ENCODE measurements at regions of chr5 and their contacts with region 1.

Region 1: DNA sequence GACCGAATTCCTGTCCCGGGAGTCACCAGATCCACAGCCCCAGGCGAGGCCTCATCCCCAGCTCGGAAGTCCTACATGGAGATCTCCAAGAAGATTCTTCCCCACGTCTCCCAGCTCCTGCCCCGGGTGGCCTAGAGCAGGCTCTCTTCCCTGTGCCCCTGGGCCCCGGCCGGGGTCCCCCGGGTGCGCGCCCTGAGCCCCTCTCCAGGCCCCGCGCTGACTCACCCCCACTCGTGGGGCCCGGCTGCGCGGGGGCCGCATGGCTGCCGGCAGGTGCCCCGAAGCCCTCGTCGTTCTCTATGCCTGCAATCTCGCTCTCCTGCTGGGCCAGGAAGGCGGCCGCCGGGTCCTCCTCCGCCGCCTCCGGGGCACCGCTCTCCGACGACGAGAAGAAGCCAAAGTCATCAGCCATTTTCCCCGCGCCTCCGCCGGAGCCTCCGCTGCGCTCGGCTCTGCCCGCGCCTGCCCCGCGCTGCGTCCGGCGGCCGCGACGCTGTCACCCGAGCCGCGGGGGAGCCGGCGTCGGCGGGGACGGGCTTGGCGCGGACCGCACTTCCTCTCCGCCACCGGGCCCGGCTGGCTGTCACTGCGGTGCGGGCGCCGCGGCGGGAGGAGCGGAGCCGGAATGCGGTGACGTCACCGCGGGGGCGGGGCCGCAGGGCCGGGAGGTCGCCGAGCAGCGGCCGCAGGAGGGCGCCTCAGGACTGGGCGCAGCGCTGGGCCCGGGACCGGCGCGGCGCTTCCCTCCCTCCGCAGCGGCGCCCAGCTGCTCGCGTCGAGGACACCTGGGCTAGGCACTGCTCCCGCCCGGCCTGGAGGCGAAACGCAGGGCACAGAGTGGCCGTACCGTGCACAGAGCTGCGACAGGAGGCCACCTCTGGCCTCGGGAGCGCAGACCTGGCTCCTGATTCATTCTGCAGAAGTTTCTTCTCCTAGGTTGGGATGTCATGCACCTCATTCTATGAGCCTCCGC is at the start of gene CLTB:
- DNase-seq: peak; percentile 89
- ATAC-seq: peak; percentile 97
- H3K4me3 Mint-ChIP-seq: peak within 1 kb of the TSS; percentile 68
- H3K27ac Mint-ChIP-seq: peak within 1 kb of the TSS; percentile 61
- H3K4me1 Mint-ChIP-seq: peaks cover 25% of the 10 kb centered on the region
- H3K27me3 Mint-ChIP-seq: peaks cover 12% of the 10 kb centered on the region
- total RNA-seq, gene CLTB: 56.7 to 61.8 TPM

Region 2: DNA sequence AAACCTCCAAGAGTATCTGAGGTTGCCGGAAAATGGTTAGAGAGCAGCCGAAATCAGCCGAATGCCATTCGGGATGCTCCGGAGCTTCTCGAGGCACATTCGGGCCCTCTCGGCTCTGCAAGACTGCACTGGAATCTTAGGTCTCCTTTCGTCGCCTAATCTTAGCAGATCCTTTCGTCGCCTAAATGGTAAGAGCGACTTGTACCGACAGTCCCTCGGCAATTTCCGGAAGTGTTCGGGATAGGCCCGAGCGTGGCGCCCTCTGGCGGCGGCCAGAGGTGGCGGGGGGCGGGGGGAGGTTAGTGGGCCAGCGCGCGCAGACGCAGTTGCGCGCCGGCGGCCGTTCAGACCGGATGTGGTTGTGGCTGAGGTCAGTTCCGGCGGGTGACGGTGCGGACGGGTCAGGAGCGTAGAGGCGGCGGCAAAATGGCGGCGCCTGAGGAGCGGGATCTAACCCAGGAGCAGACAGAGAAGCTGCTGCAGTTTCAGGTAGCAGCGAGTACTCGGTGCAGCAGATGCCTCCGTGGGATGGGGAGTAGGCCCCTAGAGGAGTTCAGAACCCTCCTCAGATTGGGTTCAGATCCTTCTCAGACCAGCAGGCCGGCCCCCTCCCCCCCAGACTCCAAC is 31.9 kb after region 1 on chr5 and contains the start of gene FAF2:
- CTCF ChIA-PET with region 1: interaction called, 30 read pairs
- DNase-seq: peak; percentile 97
- ATAC-seq: peak; percentile 95
- H3K4me3 Mint-ChIP-seq: peak within 1 kb of the TSS; percentile 98
- H3K27ac Mint-ChIP-seq: peak within 1 kb of the TSS; percentile 99
- H3K4me1 Mint-ChIP-seq: peaks cover 32% of the 10 kb centered on the region
- H3K27me3 Mint-ChIP-seq: peaks cover 2% of the 10 kb centered on the region
- total RNA-seq, gene FAF2: 29.9 to 38.7 TPM

Region 3: GRCh38 chr5:176537608-176538504 is 121.6 kb after region 1 on chr5:
- CTCF ChIA-PET with region 1: interaction called, 28 read pairs
- DNase-seq: peak; percentile 100
- ATAC-seq: peak; percentile 76
- H3K4me3 Mint-ChIP-seq: peak overlapping the region; percentile 93
- H3K27ac Mint-ChIP-seq: peak overlapping the region; percentile 90
- H3K4me1 Mint-ChIP-seq: peaks cover 68% of the 10 kb centered on the region
- H3K27me3 Mint-ChIP-seq: no peaks in the 10 kb centered on the region

Region 4: DNA sequence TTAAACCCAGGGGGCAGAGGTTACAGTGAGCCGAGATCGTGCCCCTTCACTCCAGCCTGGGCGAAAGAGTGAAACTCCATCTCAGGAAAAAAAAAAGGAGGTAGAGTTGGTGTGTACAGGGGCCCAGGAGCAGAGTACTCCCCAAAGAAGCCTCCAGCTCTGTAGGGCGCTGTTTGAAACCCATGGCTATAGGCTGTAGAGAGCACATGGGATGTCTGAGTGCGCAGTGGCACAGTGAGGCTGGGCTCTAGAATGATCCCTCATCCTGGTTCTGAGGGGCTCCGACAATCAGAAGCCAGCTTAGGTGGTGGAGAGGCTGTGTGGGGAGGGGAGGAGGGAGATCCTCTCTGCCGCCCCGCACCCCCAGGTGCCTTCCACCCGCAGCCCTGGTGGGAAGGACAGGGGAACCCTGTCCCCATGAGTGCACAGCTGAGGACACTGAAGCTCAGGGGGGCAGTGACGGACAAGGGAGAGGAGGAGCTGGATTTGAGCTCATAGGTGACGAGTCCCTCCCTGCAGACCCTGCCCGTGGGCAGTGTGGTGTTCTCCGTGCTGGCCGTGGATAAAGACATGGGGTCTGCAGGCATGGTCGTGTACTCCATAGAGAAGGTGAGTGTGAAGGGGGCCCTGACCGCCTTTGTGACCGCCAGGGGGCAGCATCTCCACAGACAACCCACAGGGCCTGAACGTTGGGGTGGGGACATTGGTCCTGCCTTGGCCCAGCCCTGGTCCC is 157.5 kb after region 1 on chr5:
- CTCF ChIA-PET with region 1: interaction called, 11 read pairs
- DNase-seq: peak; percentile 79
- ATAC-seq: peak; percentile 89
- H3K4me3 Mint-ChIP-seq: no peak overlapping the region
- H3K27ac Mint-ChIP-seq: no peak overlapping the region
- H3K4me1 Mint-ChIP-seq: peaks cover 7% of the 10 kb centered on the region
- H3K27me3 Mint-ChIP-seq: peaks cover 10% of the 10 kb centered on the region